A673 (cell line): ENCODE measurements at regions of chr2 and their contacts with region 1.

Region 1: GRCh38 chr2:119525614-119526013 is 1.3 kb upstream of the SCTR start:
- DNase-seq: peak; percentile 97
- H3K4me3 ChIP-seq: no peak overlapping the region
- H3K27ac ChIP-seq: peak overlapping the region; percentile 79
- H3K4me1 ChIP-seq: peaks cover 38% of the 10 kb centered on the region
- H3K27me3 ChIP-seq: peaks cover 4% of the 10 kb centered on the region
- CTCF ChIP-seq: no peak

Region 2: GRCh38 chr2:119407430-119408220 is 118.0 kb before region 1 on chr2:
- CTCF ChIA-PET with region 1: no interaction called
- POLR2A ChIA-PET with region 1: no interaction called
- intact Hi-C with region 1: loop called (anchors 5 kb)
- DNase-seq: peak; percentile 87
- H3K4me3 ChIP-seq: no peak overlapping the region
- H3K27ac ChIP-seq: peak overlapping the region; percentile 18
- H3K4me1 ChIP-seq: peaks cover 7% of the 10 kb centered on the region
- H3K27me3 ChIP-seq: no peaks in the 10 kb centered on the region
- CTCF ChIP-seq: peak; percentile 82

Region 3: GRCh38 chr2:120384486-120385354 is 859.1 kb after region 1 on chr2:
- CTCF ChIA-PET with region 1: no interaction called
- POLR2A ChIA-PET with region 1: no interaction called
- intact Hi-C with region 1: no loop called
- DNase-seq: no peak
- H3K4me3 ChIP-seq: no peak overlapping the region
- H3K27ac ChIP-seq: no peak overlapping the region
- H3K4me1 ChIP-seq: peaks cover 5% of the 10 kb centered on the region
- H3K27me3 ChIP-seq: no peaks in the 10 kb centered on the region
- CTCF ChIP-seq: no peak